ENCODE measurements at regions of chr1 and their contacts with region 1.

Region 1: DNA sequence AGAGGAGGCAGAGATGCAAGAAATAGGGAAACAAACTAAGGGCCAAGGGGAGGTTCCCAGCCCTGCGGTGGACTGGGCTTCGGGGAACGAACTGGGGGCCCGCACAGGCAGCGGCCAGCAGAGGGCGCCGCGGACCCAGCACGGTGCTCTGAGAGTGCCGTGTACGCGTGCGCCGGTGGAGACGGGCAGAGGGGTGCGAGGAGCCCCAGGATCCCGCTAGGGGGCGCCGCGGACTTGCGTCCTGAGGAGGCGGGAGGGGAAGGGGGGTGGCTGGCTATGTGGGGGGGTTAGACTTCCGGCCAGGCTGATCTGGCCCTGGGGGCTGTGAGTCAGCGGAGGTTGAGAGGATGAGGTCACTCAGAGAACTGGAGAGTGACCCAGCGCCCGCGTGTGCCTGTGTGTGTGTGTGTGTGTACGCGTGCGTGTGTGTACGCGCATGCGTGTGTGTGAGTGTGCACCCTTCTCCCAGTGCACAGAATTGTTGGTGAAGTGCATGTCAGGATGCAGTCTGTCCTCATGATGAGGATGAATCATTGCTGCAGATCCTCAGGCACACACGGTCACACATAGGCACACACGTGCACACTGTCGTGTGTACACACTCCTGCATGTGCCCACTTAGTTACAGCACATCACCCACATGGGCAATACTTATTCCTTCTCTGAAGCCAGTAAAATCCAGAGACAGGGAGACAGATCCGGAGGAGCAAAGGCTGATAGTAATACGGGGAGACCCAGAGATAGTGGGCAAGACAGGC is 17.0 kb downstream of the NES start:
- DNase-seq: peak; percentile 95 to 96
- ATAC-seq: peak; percentile 79 to 97 (median 88)
- H3K4me3 ChIP-seq: no peak overlapping the region
- H3K4me3 Mint-ChIP-seq: peak overlapping the region; percentile 68
- H3K27ac ChIP-seq: peak overlapping the region; percentile 40
- H3K27ac Mint-ChIP-seq: peak overlapping the region; percentile 83 to 85
- H3K4me1 ChIP-seq: peaks cover 72% of the 10 kb centered on the region
- H3K4me1 Mint-ChIP-seq: peaks cover 50 to 61% of the 10 kb centered on the region in 2 donors
- H3K27me3 ChIP-seq: peaks cover 22% of the 10 kb centered on the region
- H3K27me3 Mint-ChIP-seq: peaks cover 16 to 23% of the 10 kb centered on the region in 2 donors
- CTCF ChIP-seq: peak; percentile 96

Region 2: DNA sequence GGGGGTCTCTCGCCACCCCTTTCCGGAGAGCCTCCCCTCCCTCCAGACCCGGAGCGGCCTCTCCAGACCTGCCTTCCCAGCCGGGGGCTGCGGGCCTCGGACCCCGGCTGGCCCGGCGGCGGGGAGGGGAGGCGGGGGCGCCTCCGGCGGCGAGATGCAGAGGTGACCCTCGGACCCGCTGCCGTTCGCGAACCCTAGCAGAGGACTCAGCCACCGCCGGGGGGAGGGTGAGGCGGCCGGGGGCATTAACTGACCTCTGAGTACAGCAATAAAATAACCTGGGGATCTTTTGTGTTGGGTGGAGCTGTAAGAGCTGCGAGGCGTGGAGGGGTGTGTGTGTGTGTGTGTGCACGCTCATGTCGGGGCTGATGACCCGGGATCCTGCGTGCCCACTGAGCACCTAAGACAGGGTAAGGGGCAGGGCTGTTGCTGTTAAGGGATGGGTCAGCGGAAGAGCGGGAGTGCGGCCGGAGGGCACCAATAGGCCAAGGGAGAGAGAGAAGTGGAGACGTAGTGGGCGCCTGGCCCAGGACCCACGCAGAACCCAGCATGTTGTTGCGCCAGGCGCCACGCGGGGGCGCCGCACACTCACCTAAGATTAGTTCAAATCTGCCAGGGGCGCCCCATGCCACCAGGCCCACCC is 34.6 kb before region 1 on chr1:
- intact Hi-C with region 1: loop called (anchors 2 kb)
- DNase-seq: peak; percentile 67 to 85
- ATAC-seq: peak; percentile 73 to 78 (median 77)
- H3K4me3 ChIP-seq: no peak overlapping the region
- H3K4me3 Mint-ChIP-seq: peak overlapping the region; percentile 83
- H3K27ac ChIP-seq: no peak overlapping the region
- H3K27ac Mint-ChIP-seq: no peak overlapping the region
- H3K4me1 ChIP-seq: peaks cover 23% of the 10 kb centered on the region
- H3K4me1 Mint-ChIP-seq: peaks cover 7 to 8% of the 10 kb centered on the region in 2 donors
- H3K27me3 ChIP-seq: peaks cover 30% of the 10 kb centered on the region
- H3K27me3 Mint-ChIP-seq: peaks cover 51 to 55% of the 10 kb centered on the region in 2 donors
- CTCF ChIP-seq: peak; percentile 91

Region 3: GRCh38 chr1:156816561-156817328 is 156.6 kb after region 1 on chr1 and contains the start of gene SH2D2A:
- intact Hi-C with region 1: loop called (anchors 1 kb)
- DNase-seq: peak; percentile 94 to 100
- ATAC-seq: peak; percentile 77 to 92 (median 84)
- H3K4me3 ChIP-seq: peak within 1 kb of the TSS; percentile 76
- H3K4me3 Mint-ChIP-seq: peak within 1 kb of the TSS; percentile 96
- H3K27ac ChIP-seq: peak within 1 kb of the TSS; percentile 99
- H3K27ac Mint-ChIP-seq: peak within 1 kb of the TSS; percentile 98
- H3K4me1 ChIP-seq: peaks cover 61% of the 10 kb centered on the region
- H3K4me1 Mint-ChIP-seq: peaks cover 67 to 79% of the 10 kb centered on the region in 2 donors
- H3K27me3 ChIP-seq: no peaks in the 10 kb centered on the region
- H3K27me3 Mint-ChIP-seq: no peaks in the 10 kb centered on the region
- CTCF ChIP-seq: no peak
- total RNA-seq, gene SH2D2A: 155 to 324 (median 312) TPM

Measured in natural killer cell (primary cell).